Ovary (tissue), 10 donors: ENCODE measurements at regions of chrX and their contacts with region 1.

Region 1: GRCh38 chrX:16786139-16786790 is at the start of gene TXLNG:
- DNase-seq: peak; percentile 98 to 99 (median 99)
- H3K4me3 ChIP-seq: peak within 1 kb of the TSS; percentile 63
- H3K27ac ChIP-seq: peak within 1 kb of the TSS; percentile 71 to 94
- H3K4me1 ChIP-seq: peaks cover 3% of the 10 kb centered on the region
- H3K27me3 ChIP-seq: no peaks in the 10 kb centered on the region
- CTCF ChIP-seq: no peak
- EP300 ChIP-seq: no peak
- POLR2A ChIP-seq: peak; percentile 92
- total RNA-seq, gene TXLNG: 18.7 to 27.7 (median 22.2) TPM

Region 2: DNA sequence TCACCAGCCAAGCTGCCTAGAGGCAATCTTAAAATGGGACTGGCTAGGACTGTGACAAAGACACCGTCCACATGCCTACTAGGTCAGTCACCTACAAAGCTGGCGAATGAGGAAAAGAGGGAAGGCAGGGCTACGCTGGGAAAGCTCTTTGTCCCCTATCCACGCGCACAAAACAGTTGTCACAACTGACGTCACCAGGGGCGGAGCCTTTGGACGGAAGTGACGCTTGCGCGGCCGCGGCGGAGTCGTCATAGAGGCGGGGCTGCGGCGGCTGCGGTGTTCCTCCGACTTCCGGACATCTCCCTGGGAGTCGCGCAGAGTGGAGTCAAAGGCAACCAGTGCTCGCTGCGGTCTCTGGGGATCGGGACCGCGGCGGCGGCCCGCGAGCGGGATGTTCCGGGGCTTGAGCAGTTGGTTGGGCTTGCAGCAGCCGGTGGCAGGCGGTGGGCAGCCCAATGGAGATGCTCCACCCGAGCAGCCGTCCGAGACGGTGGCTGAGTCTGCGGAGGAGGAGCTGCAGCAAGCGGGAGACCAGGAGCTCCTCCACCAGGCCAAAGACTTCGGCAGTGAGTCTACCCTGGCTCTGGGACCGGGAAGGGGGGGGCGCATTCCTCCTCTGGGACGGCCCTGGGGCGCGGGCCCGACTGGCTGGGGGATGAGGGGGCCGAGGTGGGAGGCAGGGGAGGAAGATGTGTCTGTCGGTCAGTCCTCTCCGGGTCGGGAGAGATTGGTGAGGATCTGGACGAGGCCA is 66.8 kb before region 1 on chrX and contains the start of gene SYAP1:
- intact Hi-C with region 1: loop called in 1 of 4 experiments (anchors 5 kb)
- DNase-seq: peak; percentile 98 to 99 (median 99)
- H3K4me3 ChIP-seq: peak within 1 kb of the TSS; percentile 86
- H3K27ac ChIP-seq: peak within 1 kb of the TSS; percentile 67 to 91
- H3K4me1 ChIP-seq: peaks cover 4% of the 10 kb centered on the region
- H3K27me3 ChIP-seq: no peaks in the 10 kb centered on the region
- CTCF ChIP-seq: no peak
- EP300 ChIP-seq: peak; percentile 73
- POLR2A ChIP-seq: peak; percentile 98
- total RNA-seq, gene SYAP1: 19.3 to 36.9 (median 26.2) TPM

Region 3: GRCh38 chrX:16733013-16733412 is 53.3 kb before region 1 on chrX:
- intact Hi-C with region 1: no loop called
- DNase-seq: no peak
- H3K4me3 ChIP-seq: no peak overlapping the region
- H3K27ac ChIP-seq: no peak overlapping the region
- H3K4me1 ChIP-seq: no peaks in the 10 kb centered on the region
- H3K27me3 ChIP-seq: no peaks in the 10 kb centered on the region
- CTCF ChIP-seq: no peak
- EP300 ChIP-seq: no peak
- POLR2A ChIP-seq: no peak

Region 4: GRCh38 chrX:16914058-16914457 is 127.8 kb after region 1 on chrX:
- intact Hi-C with region 1: no loop called
- DNase-seq: no peak
- H3K4me3 ChIP-seq: no peak overlapping the region
- H3K27ac ChIP-seq: no peak overlapping the region
- H3K4me1 ChIP-seq: no peaks in the 10 kb centered on the region
- H3K27me3 ChIP-seq: no peaks in the 10 kb centered on the region
- CTCF ChIP-seq: no peak
- EP300 ChIP-seq: no peak
- POLR2A ChIP-seq: no peak